ENCODE measurements at regions of chr5 and their contacts with region 1.

Region 1: DNA sequence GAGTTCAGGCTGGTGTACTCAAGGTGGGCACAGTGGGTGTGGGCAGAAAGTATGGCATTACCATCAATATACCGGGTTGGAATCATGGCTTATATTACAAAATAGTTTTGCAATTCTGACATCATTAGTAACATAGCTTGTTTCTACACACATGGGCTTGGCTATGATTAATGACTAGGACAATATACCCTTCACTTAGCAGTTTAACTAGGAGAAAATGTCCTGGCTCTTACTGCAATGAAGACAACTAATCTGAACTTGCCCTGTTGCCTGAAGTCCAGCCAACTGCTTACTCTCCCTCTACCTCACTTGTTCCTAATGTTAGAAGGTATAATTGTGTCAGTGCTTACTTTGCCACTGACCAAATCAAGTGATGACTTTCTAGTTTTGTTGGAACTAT is 612.5 kb downstream of the EFNA5 start:
- DNase-seq: no peak
- H3K4me3 ChIP-seq: no peak overlapping the region
- H3K27ac ChIP-seq: no peak overlapping the region
- H3K4me1 ChIP-seq: no peaks in the 10 kb centered on the region
- H3K27me3 ChIP-seq: no peaks in the 10 kb centered on the region
- CTCF ChIP-seq: no peak

Region 2: GRCh38 chr5:107168848-107169752 is 110.9 kb after region 1 on chr5:
- CTCF ChIA-PET with region 1: no interaction called
- POLR2A ChIA-PET with region 1: interaction called, 11 read pairs
- intact Hi-C with region 1: no loop called
- DNase-seq: no peak
- H3K4me3 ChIP-seq: no peak overlapping the region
- H3K27ac ChIP-seq: no peak overlapping the region
- H3K4me1 ChIP-seq: no peaks in the 10 kb centered on the region
- H3K27me3 ChIP-seq: no peaks in the 10 kb centered on the region
- CTCF ChIP-seq: no peak

Region 3: DNA sequence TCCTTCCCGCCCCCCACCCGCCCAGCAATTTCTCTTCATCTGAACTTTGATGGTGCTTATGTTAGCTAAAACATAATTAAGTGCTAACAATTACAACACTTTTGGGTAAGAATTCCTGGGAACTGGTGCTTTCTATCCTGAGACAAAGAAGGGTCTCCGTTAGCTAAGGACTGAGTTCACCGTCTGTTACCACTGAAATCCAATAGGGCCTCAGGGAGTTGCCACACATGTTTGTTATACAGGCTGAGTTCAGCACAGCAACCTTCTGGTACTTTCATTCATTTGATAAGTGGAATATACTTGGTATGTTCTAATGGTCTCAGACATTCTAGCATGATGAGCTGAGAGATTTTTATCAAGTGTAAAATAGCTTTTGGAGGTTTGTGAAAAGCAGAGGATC is 174.5 kb after region 1 on chr5:
- CTCF ChIA-PET with region 1: no interaction called
- POLR2A ChIA-PET with region 1: no interaction called
- intact Hi-C with region 1: no loop called
- DNase-seq: no peak
- H3K4me3 ChIP-seq: no peak overlapping the region
- H3K27ac ChIP-seq: no peak overlapping the region
- H3K4me1 ChIP-seq: peaks cover 22% of the 10 kb centered on the region
- H3K27me3 ChIP-seq: no peaks in the 10 kb centered on the region
- CTCF ChIP-seq: no peak

Region 4: DNA sequence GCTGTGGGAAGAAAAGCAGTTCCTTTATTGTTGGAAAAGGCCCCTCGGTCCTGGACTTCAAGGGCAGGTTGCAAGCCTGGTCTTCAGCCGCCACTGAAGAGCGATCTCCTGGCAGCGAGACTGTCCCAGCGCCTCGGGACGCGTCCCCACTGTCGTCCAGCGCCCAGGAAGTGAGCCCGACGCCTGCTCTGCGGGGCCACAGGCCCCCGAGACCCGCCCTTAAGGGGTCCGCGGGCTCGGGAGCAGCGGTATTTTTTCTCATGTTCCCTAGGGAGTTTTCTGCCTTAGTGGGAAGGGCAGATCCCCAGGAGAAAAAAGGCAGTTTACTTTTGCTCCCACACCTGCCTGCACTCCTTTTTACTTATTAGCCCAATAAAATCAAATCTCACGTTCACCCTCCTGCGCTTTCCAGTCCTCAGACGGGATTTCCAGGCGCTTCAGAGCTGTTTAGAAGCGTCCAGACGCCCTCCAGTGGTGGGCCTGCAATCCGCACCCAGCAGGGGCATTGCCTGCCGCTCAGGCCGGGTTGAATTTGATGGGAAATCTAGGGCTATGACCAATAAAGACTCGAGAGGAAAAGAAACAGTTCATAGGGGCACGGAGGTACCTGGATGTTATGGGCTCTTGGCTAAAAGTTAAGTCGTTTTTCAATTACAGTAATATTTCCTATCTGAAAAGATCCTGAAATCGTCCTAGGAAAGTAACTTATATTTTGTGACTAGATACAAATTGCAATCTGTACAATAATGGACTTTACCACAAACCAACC is 615.3 kb after region 1 on chr5:
- CTCF ChIA-PET with region 1: no interaction called
- POLR2A ChIA-PET with region 1: no interaction called
- intact Hi-C with region 1: no loop called
- DNase-seq: peak; percentile 93
- H3K4me3 ChIP-seq: peak overlapping the region; percentile 65
- H3K27ac ChIP-seq: peak overlapping the region; percentile 47
- H3K4me1 ChIP-seq: peaks cover 4% of the 10 kb centered on the region
- H3K27me3 ChIP-seq: no peaks in the 10 kb centered on the region
- CTCF ChIP-seq: peak; percentile 99

Measured in A673 (cell line).